Left ventricle myocardium inferior (tissue), 1 donor: ENCODE measurements at regions of chr18 and their contacts with region 1.

Region 1: DNA sequence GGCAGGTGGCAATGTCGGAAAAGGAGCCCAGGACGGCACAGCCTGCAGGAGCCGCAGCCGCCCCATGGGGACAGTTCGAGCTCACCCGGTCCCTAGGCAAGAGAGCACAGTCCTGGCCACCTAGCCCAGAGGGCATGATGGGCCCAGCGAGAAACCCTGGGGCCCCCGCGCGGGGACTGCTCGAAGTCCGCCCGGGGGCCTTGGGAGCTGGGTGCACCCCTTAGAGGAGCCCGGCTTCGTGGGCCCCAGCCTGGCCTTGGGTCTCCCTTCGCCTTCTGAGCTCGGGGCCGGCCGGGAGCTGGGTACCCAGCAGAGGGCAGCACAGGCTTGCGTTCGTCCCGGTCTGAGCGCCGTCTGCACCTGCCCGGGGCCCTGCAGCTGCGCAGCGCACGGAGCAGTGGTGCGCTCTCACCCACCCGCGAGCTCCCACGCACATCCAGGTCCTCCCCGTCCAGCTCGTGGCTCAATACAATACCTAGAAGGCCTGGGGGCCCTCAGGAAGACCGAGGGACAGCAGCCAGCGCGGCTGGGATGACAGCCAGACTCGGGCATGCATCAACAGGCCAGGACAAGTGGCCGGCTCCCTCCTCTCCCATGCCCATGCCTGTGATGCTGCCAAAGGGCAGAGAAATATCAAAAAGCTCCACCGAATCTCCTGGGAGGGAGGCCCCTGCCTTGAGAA is 96.2 kb upstream of the ZNF532 start:
- DNase-seq: peak; percentile 73
- H3K4me3 ChIP-seq: peak overlapping the region; percentile 59
- H3K27ac ChIP-seq: peak overlapping the region; percentile 17
- H3K4me1 ChIP-seq: peaks cover 23% of the 10 kb centered on the region
- H3K27me3 ChIP-seq: peaks cover 10% of the 10 kb centered on the region
- CTCF ChIP-seq: peak; percentile 88

Region 2: DNA sequence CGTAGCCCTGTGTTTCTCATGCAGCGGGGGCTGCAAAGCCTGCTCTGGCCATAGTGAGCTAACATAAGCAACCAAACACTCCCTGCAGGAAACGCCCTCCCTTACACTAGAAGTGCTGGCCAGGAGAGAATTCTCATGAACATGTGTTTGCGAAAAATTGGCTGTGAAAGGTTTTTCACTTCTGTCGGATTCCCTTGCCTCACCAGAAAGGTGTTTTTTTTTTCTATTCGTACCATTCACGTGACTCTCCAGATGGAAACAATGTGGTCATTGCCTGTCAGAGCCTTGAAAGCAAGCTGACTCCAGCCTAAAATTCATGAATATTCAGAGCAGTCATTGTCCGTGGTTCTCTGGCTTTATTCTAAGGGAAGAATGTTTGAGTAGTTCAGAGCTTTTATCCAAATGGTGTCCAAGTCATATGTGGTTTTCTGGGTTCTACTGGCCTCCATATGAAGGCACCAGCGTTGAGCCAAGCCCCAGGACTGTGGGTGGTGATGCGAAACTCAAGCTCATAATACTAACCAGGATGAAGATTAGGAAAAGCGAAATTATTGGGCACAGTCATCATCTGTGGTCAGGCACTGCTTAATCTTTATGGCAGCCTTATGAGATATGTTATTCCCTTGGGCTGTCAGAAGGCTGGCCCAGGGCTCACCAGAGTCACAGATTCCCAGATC is 376.0 kb before region 1 on chr18:
- intact Hi-C with region 1: loop called (anchors 10 kb)
- DNase-seq: no peak
- H3K4me3 ChIP-seq: no peak overlapping the region
- H3K27ac ChIP-seq: peak overlapping the region; percentile 28
- H3K4me1 ChIP-seq: peaks cover 27% of the 10 kb centered on the region
- H3K27me3 ChIP-seq: no peaks in the 10 kb centered on the region
- CTCF ChIP-seq: no peak

Region 3: DNA sequence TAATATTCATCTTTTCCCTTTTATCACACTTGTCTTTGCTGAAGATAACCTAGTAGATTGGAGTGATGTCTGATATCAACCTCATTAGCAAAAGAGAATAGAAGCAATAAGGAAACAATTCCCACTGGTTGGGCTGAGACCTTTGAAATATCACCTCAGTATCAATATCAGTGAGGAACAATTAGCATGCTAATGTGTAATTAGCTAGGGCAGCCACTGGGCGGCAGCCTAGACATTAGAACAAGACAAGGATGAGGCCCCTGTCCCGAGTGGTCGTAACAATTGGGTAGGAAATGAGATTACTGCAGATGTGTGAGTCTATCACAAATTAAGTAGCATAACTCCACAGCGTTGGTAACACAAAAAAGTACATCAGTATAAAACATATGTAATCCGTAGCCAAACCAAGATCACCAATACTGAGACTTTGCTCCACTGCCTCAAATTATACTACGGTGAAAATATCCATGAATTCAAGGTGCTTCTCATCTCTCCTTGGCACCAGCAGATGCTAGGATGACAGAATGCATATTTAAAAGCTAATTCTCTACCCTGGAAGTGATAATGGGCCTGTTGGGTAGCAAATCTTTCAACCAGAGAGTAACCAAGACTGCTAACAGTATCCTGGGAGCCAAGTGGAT is 238.6 kb before region 1 on chr18:
- intact Hi-C with region 1: loop called (anchors 2 kb)
- DNase-seq: peak; percentile 49
- H3K4me3 ChIP-seq: no peak overlapping the region
- H3K27ac ChIP-seq: no peak overlapping the region
- H3K4me1 ChIP-seq: peaks cover 8% of the 10 kb centered on the region
- H3K27me3 ChIP-seq: no peaks in the 10 kb centered on the region
- CTCF ChIP-seq: peak; percentile 77

Region 4: GRCh38 chr18:58669731-58670378 is 98.6 kb before region 1 on chr18:
- intact Hi-C with region 1: loop called (anchors 10 kb)
- DNase-seq: no peak
- H3K4me3 ChIP-seq: peak overlapping the region; percentile 86
- H3K27ac ChIP-seq: peak overlapping the region; percentile 98
- H3K4me1 ChIP-seq: peaks cover 44% of the 10 kb centered on the region
- H3K27me3 ChIP-seq: no peaks in the 10 kb centered on the region
- CTCF ChIP-seq: no peak

Region 5: DNA sequence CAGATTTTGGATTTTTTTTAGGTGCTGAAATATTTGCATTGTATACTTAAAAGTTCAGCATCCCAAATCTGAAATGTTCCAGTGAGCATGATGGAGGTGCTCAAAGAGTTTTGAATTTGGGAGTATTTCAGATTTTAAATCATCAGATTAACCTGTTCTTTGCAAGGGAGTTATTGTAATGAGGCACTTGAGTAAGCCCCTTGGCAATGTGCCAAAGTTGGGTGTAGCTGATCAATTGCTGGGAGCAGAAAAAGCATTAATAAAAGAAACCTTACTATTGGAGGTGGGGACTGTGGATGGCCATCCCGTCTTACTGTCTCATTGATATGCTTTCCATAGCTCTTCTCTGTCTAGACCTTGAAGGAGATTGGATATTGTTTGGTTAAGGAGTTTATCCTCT is 68.9 kb before region 1 on chr18:
- intact Hi-C with region 1: no loop called
- DNase-seq: no peak
- H3K4me3 ChIP-seq: no peak overlapping the region
- H3K27ac ChIP-seq: no peak overlapping the region
- H3K4me1 ChIP-seq: peaks cover 36% of the 10 kb centered on the region
- H3K27me3 ChIP-seq: no peaks in the 10 kb centered on the region
- CTCF ChIP-seq: no peak

Region 6: GRCh38 chr18:59056706-59057492 is 288.5 kb after region 1 on chr18:
- intact Hi-C with region 1: no loop called
- DNase-seq: peak; percentile 59
- H3K4me3 ChIP-seq: no peak overlapping the region
- H3K27ac ChIP-seq: no peak overlapping the region
- H3K4me1 ChIP-seq: peaks cover 45% of the 10 kb centered on the region
- H3K27me3 ChIP-seq: no peaks in the 10 kb centered on the region
- CTCF ChIP-seq: peak; percentile 76